HCT116 (cell line): ENCODE measurements at regions of chr10 and their contacts with region 1.

Region 1: DNA sequence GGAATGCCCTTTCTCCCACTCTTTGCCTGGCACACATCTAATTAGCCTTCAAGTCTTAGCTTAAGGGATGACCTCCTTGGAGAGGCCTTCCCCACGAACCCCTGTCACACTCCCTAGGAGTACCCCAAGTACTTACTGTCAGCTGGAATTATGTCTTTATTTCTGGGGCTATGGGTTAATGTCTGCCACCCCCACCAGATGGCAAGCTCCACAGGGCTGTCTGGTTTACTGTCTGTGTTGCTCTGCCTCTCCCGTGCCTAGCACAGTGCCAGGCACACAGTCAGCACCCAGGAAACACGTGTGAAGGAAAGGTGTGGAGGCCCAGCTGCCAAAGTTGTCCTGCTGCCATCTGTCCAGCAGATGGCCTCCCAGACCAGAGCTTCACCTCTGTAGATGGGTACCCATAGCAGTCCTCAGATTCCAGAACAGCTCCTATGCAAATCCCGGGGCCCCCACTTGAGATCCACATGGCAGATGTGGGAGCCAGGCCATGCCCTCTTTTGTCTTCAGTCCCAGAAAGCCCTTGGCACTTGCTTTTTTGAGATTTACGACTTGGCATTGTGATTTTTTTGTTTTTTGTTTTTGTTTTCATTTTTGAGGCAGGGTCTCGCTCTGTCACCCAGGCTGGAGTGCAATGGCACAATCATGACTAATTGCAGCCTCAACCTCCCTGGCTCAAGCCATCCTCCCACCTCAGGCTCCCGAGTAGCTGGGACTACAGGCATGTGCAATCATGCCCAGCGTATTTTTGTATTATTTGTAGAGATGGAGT is 17.2 kb upstream of the PALD1 start:
- DNase-seq: peak; percentile 67
- ATAC-seq: peak; percentile 78
- H3K4me3 ChIP-seq: no peak overlapping the region
- H3K27ac ChIP-seq: no peak overlapping the region
- H3K4me1 ChIP-seq: peaks cover 31 to 54% of the 10 kb centered on the region in 2 experiments
- H3K27me3 ChIP-seq: no peaks in the 10 kb centered on the region
- CTCF ChIP-seq: peak; percentile 86 to 92 (median 88)
- POLR2A ChIP-seq: no peak
- RAD21 ChIP-seq: peak; percentile 99

Region 2: DNA sequence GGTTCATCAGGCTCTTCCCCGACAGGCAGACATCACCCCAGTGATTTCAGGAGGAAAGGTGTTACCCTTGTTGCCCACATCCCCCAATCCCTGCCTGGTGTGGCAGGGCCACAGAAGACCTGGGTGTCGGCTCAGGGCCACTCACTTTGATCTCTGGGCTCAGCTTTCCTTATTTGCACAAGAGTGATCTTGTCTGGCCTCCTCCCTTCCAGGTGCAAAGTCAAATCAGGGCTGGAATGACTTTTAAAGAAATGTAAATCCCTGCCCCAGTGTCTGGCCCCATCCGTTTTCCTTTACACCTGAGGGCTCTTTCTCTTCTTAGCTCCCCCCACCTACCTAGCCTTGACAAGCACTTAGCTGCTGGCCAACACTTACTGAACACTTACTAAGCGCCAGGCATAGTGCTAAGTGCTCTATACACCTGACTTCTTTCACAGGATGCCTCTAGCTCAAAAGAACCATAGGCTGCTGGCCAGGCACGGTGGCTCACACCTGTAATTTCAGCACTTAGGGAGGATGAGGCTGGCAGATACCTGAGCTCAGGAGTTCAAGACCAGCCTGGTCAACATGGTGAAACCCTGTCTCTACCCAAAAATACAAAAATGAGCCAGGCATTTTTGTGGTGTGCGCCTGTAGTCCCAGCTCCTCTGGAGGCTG is 18.9 kb before region 1 on chr10:
- CTCF ChIA-PET with region 1: no interaction called
- POLR2A ChIA-PET with region 1: no interaction called
- RAD21 ChIA-PET with region 1: no interaction called
- intact Hi-C with region 1: no loop called
- DNase-seq: no peak
- ATAC-seq: no peak
- H3K4me3 ChIP-seq: no peak overlapping the region
- H3K27ac ChIP-seq: no peak overlapping the region
- H3K4me1 ChIP-seq: peaks cover 0 to 4% of the 10 kb centered on the region in 2 experiments; a peak in 1 of 4 replicates
- H3K27me3 ChIP-seq: no peaks in the 10 kb centered on the region
- CTCF ChIP-seq: no peak
- POLR2A ChIP-seq: no peak
- RAD21 ChIP-seq: no peak

Region 3: GRCh38 chr10:70478191-70479164 is 17.1 kb after region 1 on chr10 and contains the start of gene PALD1:
- CTCF ChIA-PET with region 1: interaction called, 14 read pairs
- POLR2A ChIA-PET with region 1: interaction called, 6 read pairs
- RAD21 ChIA-PET with region 1: interaction called, 5 to 7 read pairs
- intact Hi-C with region 1: no loop called
- DNase-seq: peak; percentile 48
- ATAC-seq: peak; percentile 77
- H3K4me3 ChIP-seq: peak within 1 kb of the TSS; percentile 80 to 97
- H3K27ac ChIP-seq: peak within 1 kb of the TSS; percentile 95
- H3K4me1 ChIP-seq: peaks cover 26 to 61% of the 10 kb centered on the region in 2 experiments
- H3K27me3 ChIP-seq: no peaks in the 10 kb centered on the region
- CTCF ChIP-seq: peak in 1 of 3 experiments; percentile 32; a peak in 2 of 6 replicates
- POLR2A ChIP-seq: peak; percentile 61
- RAD21 ChIP-seq: no peak
- total RNA-seq, gene PALD1: 33.1 TPM

Region 4: GRCh38 chr10:70540089-70540788 is 78.8 kb after region 1 on chr10:
- CTCF ChIA-PET with region 1: interaction called, 21 read pairs
- POLR2A ChIA-PET with region 1: no interaction called
- RAD21 ChIA-PET with region 1: interaction called, 3 to 7 read pairs
- intact Hi-C with region 1: loop called (anchors 1 kb)
- DNase-seq: no peak
- ATAC-seq: peak; percentile 53
- H3K4me3 ChIP-seq: no peak overlapping the region
- H3K27ac ChIP-seq: no peak overlapping the region
- H3K4me1 ChIP-seq: peaks cover 3 to 11% of the 10 kb centered on the region in 2 experiments; a peak in 2 of 4 replicates
- H3K27me3 ChIP-seq: no peaks in the 10 kb centered on the region
- CTCF ChIP-seq: peak; percentile 48 to 78 (median 73); a peak in 5 of 6 replicates
- POLR2A ChIP-seq: no peak
- RAD21 ChIP-seq: peak; percentile 80

Region 5: DNA sequence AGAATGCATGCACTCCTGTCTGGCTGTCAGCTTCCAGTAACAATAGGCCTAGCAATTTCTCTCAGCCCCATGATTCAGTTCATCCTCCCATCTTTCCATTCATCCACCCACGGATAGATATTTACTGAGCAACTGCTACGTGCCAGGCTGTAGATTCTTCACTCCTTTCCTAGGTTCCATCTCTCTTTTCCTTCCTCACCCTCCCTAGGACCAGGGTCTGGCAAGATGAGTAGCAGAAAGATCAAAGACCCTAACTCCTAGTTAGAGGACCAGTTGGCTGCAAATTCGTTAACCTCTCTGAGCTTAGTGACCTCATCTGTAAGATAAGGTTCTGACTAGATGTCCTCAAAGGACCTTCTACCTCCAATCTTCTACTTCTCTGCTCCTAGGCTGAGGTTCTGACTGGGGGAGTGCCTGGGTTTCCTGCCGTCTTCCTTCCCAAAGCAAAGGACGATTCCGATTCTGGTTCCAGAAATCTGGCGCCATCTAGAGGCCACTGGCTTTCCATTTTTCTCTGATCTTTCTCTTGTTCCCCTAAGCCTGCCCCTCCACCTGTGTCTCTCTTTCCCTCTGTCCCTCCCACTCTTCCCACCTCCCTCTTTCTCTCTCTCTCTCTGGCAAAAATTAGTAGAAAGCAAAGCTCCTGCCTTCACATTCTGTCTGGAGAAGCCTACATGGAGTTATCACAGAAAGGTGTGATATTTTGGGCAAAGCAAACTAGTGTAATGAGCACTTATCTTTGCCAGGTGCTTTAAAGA is 297.5 kb after region 1 on chr10:
- CTCF ChIA-PET with region 1: interaction called, 4 read pairs
- POLR2A ChIA-PET with region 1: no interaction called
- RAD21 ChIA-PET with region 1: no interaction called
- intact Hi-C with region 1: loop called (anchors 5 kb)
- DNase-seq: peak; percentile 60
- ATAC-seq: peak; percentile 84
- H3K4me3 ChIP-seq: no peak overlapping the region
- H3K27ac ChIP-seq: no peak overlapping the region
- H3K4me1 ChIP-seq: peaks cover 23 to 53% of the 10 kb centered on the region in 2 experiments
- H3K27me3 ChIP-seq: no peaks in the 10 kb centered on the region
- CTCF ChIP-seq: peak; percentile 72 to 85 (median 76)
- POLR2A ChIP-seq: no peak
- RAD21 ChIP-seq: peak; percentile 93

Region 6: GRCh38 chr10:70815504-70816219 is 354.3 kb after region 1 on chr10 and contains the start of gene SGPL1:
- CTCF ChIA-PET with region 1: no interaction called
- POLR2A ChIA-PET with region 1: no interaction called
- RAD21 ChIA-PET with region 1: no interaction called
- intact Hi-C with region 1: loop called (anchors 2 kb)
- DNase-seq: peak; percentile 55
- ATAC-seq: peak; percentile 82
- H3K4me3 ChIP-seq: peak within 1 kb of the TSS; percentile 77 to 81
- H3K27ac ChIP-seq: peak within 1 kb of the TSS; percentile 89
- H3K4me1 ChIP-seq: peaks cover 9 to 17% of the 10 kb centered on the region in 2 experiments; a peak in 3 of 4 replicates
- H3K27me3 ChIP-seq: no peaks in the 10 kb centered on the region
- CTCF ChIP-seq: peak; percentile 50 to 87 (median 86); a peak in 5 of 6 replicates
- POLR2A ChIP-seq: peak; percentile 27
- RAD21 ChIP-seq: peak; percentile 74
- total RNA-seq, gene SGPL1: 69.4 TPM